ENCODE measurements at regions of chr7 and their contacts with region 1.

Region 1: DNA sequence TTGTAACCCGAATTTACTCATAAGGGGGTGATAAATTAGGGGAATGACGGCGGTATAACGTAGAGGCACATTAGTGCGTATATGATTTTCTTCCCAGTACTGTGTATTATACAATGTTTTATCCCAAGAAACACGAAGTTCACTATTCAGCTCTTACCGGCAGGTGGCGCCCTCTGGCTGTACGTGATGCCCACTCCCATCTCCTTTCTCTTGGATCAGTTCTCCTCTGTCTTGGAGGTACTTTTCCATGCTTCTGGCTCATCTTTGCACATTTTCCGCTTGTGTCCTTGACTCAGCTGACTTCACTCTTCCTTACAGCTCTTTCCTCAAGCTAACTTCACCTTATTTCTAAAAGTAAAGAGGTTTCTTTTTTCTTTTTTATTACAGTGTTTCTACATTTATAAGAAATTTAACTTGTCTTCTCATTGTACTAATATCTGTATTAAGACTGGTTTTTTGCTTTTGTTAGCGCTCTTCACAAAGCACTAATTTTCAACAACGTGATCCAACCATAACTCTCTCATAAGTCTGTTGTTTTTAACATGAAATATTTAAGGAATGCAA is 21.3 kb downstream of the TMEM176B start:
- DNase-seq: peak; percentile 78 to 91 (median 83)
- ATAC-seq: peak; percentile 65 to 89 (median 86)
- H3K4me3 ChIP-seq: no peak overlapping the region
- H3K27ac ChIP-seq: no peak overlapping the region
- H3K4me1 ChIP-seq: peaks cover 0 to 31% (median 0%) of the 10 kb centered on the region in 12 donors
- H3K27me3 ChIP-seq: no peaks in the 10 kb centered on the region
- CTCF ChIP-seq: peak; percentile 84 to 97 (median 91)
- POLR2A ChIP-seq: no peak

Region 2: GRCh38 chr7:150356265-150356897 is 422.4 kb before region 1 on chr7:
- intact Hi-C with region 1: loop called in 1 of 10 experiments (anchors 10 kb)
- DNase-seq: no peak
- ATAC-seq: no peak
- H3K4me3 ChIP-seq: no peak overlapping the region
- H3K27ac ChIP-seq: no peak overlapping the region
- H3K4me1 ChIP-seq: peaks cover 0 to 12% (median 0%) of the 10 kb centered on the region in 12 donors
- H3K27me3 ChIP-seq: no peaks in the 10 kb centered on the region
- CTCF ChIP-seq: peak; percentile 49 to 79 (median 68)
- POLR2A ChIP-seq: no peak

Region 3: GRCh38 chr7:150860291-150860977 is 81.6 kb after region 1 on chr7:
- intact Hi-C with region 1: loop called in 2 of 10 experiments (anchors 5 kb)
- DNase-seq: peak in 1 of 5 donors; percentile 14
- ATAC-seq: peak in 2 of 4 donors; percentile 32
- H3K4me3 ChIP-seq: no peak overlapping the region
- H3K27ac ChIP-seq: no peak overlapping the region
- H3K4me1 ChIP-seq: no peaks in the 10 kb centered on the region
- H3K27me3 ChIP-seq: peaks cover 0 to 4% (median 0%) of the 10 kb centered on the region in 9 donors
- CTCF ChIP-seq: peak in 9 of 12 donors; percentile 10 to 38 (median 21)
- POLR2A ChIP-seq: no peak

Region 4: DNA sequence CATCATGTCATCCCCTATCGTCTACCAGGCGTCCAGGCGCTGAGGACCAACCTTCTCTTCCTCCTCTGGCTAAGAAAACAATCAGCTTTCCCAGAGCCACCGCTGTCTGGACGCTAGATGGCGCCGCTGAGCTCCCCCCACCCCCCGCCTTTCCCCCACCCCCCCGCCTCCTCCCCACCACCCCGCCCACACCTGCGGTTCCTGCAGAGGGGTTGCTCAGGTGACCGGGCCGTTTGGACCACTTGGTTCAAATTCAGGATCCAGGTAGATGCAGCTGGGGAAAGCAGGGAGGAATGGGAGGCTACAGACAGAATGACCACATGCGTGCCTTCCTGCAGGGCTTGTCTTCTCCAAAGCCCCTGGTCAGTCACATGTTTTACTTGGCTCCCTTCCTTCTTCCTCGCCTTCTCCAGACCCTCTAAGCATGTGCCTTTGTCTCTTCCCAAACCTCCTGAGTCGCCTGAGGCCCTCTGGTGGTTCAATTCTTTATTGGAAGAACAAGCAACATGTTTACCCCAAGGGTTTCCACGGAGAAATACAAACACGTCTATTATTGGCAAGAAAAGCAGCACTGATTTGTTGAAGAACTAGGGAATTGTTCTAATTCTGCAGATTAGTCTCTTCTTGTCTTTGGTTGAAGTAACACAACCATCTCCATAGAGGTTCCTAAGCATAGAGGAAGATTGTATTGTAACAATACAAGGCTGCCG is 98.2 kb after region 1 on chr7:
- intact Hi-C with region 1: loop called (anchors 1 to 5 kb)
- DNase-seq: peak in 4 of 5 donors; percentile 51 to 66 (median 61)
- ATAC-seq: peak; percentile 71 to 94 (median 90)
- H3K4me3 ChIP-seq: no peak overlapping the region
- H3K27ac ChIP-seq: no peak overlapping the region
- H3K4me1 ChIP-seq: peaks cover 0 to 16% (median 2%) of the 10 kb centered on the region in 12 donors
- H3K27me3 ChIP-seq: no peaks in the 10 kb centered on the region
- CTCF ChIP-seq: peak; percentile 40 to 65 (median 56)
- POLR2A ChIP-seq: no peak

Region 5: GRCh38 chr7:151003572-151003971 is 224.8 kb after region 1 on chr7:
- intact Hi-C with region 1: no loop called
- DNase-seq: peak in 1 of 5 donors; percentile 6
- ATAC-seq: no peak
- H3K4me3 ChIP-seq: no peak overlapping the region
- H3K27ac ChIP-seq: no peak overlapping the region
- H3K4me1 ChIP-seq: peaks cover 0 to 24% (median 21%) of the 10 kb centered on the region in 12 donors
- H3K27me3 ChIP-seq: no peaks in the 10 kb centered on the region
- CTCF ChIP-seq: no peak
- POLR2A ChIP-seq: no peak